Sciatic nerve (tissue), 2 donors: ENCODE measurements at regions of chr13 and their contacts with region 1.

Region 1: GRCh38 chr13:32199168-32199567 is 116.0 kb downstream of the ZAR1L start:
- DNase-seq: no peak
- ATAC-seq: no peak

Region 2: DNA sequence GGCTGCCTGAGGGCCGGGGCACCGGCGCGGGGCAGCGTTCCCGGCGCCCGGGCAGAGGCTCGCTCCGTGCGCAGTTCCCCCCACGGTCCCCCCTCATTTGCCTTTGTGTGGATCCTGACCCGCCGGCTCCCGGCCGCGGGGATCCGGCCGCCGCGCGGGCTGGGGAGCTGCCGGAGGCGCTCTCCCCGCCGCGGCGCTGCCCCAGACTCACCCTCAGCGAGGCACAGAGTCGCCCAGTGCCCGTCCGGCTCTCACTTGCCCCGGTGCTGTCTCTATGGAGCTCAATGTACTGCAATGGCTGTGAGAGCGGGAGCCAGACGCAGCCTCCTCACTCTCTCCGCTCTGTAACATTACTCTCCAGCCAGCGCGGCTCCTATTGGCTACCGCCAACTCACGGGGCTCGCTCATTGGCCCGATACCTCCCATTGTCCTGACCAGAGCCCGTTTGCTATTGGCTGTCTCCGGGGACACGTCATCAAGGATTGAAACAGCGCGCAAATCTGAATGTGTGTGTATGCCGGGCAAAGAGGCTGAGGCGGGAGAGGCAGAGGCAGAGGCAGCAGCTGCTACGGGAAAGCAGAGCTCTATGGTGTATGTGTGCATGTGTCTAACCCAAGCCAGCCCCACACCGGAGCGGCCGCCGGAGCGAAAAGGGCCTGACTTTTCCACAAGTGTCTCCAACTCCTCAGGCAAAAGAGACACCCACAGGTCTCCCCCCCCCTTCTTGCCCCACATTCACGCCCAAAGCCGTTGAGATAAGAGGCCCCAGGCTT is 1733.4 kb before region 1 on chr13 and contains the start of gene HMGB1:
- intact Hi-C with region 1: no loop called
- DNase-seq: peak; percentile 98
- ATAC-seq: peak; percentile 98
- total RNA-seq, gene HMGB1: 304 TPM

Region 3: GRCh38 chr13:32224916-32225315 is 25.7 kb after region 1 on chr13:
- intact Hi-C with region 1: loop called (anchors 1 kb)
- DNase-seq: no peak
- ATAC-seq: no peak

Region 4: DNA sequence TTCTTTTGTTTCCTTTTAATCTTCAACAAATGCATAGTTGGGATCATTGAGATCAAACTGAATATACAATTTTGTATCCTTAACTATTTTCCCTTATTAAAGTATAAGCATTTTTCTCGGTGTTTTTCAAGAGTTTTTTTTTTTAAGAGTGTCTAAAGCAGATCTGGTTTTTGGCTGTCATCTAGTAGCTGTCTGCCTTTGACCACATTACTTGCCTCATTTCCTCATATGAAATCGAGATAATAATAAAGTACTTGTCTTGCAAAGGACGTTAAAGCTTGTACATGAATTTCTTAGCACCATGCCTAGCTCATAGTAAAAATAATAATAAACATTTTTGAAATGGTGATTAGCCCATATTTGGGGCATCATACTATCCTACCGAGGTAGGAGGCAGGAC is 508.3 kb after region 1 on chr13:
- intact Hi-C with region 1: no loop called
- DNase-seq: no peak
- ATAC-seq: no peak

Region 5: GRCh38 chr13:32824671-32825070 is 625.5 kb after region 1 on chr13:
- intact Hi-C with region 1: no loop called
- DNase-seq: no peak
- ATAC-seq: no peak

Region 6: GRCh38 chr13:33740134-33740538 is 1541.0 kb after region 1 on chr13:
- intact Hi-C with region 1: no loop called
- DNase-seq: no peak
- ATAC-seq: peak; percentile 59